ENCODE measurements at regions of chr10 and their contacts with region 1.

Region 1: DNA sequence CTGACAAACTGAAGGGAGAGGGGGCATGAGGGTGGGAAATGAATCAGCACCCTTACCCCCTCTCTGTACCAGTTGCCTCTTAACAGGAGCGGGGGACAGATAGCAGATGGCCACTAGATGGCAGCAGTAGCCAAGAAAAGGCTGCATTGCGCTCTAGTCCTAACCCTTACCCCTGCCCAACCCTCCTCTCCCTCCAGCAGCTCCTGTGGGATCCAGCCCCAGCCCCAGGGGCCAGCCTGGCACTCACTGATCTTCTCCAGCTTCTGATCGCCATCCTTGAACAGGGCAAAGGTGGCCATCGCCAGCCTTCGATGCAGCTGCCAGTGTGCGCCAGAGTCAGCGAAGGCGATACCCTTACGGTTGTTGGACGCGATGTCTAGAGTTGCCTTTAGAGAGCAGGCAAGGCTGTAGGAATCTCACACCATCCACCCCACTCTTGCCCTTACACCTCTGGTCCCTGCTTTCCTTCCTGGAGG is 2.2 kb downstream of the CYP17A1 start:
- H3K4me3 Mint-ChIP-seq: no peak overlapping the region
- H3K27ac Mint-ChIP-seq: no peak overlapping the region
- H3K4me1 Mint-ChIP-seq: peaks cover 10% of the 10 kb centered on the region
- H3K27me3 Mint-ChIP-seq: peaks cover 11% of the 10 kb centered on the region

Region 2: DNA sequence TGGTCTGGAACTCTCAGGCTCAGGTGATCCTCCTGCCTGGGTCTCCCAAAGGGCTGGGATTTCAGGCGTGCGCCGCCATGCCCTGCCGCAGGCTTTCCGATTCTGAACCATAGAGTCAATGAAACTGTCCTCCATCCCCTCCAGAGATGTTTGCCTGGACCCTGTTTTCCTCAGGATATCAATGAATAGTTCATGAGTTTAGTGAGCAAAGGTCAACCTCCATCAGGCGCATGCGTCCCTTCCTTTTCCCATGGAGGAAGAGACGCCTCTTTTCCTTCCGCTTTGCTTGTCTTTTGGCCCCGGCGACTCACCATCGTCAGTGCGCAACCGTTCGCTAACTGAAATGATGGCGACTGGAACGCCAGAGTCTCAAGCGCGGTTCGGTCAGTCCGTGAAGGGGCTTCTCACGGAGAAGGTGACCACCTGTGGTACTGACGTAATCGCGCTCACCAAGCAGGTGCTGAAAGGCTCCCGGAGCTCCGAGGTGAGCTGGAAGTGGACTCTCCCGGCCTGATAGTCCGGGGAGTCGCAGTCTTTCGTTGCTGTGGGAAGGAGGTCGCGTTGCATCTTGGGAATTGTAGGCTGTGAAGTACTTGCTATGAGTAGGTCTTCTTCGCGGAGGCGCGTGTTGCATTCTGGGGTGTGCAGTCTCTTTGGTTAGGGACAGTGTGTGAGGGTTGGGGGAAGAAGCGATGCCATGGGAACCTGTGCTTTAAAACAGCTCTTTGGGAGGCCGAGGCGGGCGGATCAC is 19.1 kb after region 1 on chr10 and contains the start of gene BORCS7:
- intact Hi-C with region 1: no loop called
- H3K4me3 Mint-ChIP-seq: peak within 1 kb of the TSS; percentile 85
- H3K27ac Mint-ChIP-seq: peak within 1 kb of the TSS; percentile 96
- H3K4me1 Mint-ChIP-seq: no peaks in the 10 kb centered on the region
- H3K27me3 Mint-ChIP-seq: no peaks in the 10 kb centered on the region

Region 3: GRCh38 chr10:102904346-102904745 is 69.3 kb after region 1 on chr10:
- intact Hi-C with region 1: loop called (anchors 1 kb)
- H3K4me3 Mint-ChIP-seq: no peak overlapping the region
- H3K27ac Mint-ChIP-seq: no peak overlapping the region
- H3K4me1 Mint-ChIP-seq: no peaks in the 10 kb centered on the region
- H3K27me3 Mint-ChIP-seq: no peaks in the 10 kb centered on the region

Region 4: GRCh38 chr10:103333925-103334520 is 499.0 kb after region 1 on chr10:
- intact Hi-C with region 1: loop called (anchors 10 kb)
- H3K4me3 Mint-ChIP-seq: no peak overlapping the region
- H3K27ac Mint-ChIP-seq: no peak overlapping the region
- H3K4me1 Mint-ChIP-seq: no peaks in the 10 kb centered on the region
- H3K27me3 Mint-ChIP-seq: no peaks in the 10 kb centered on the region